Left lung (tissue), 14 donors: ENCODE measurements at regions of chr12 and their contacts with region 1.

Region 1: DNA sequence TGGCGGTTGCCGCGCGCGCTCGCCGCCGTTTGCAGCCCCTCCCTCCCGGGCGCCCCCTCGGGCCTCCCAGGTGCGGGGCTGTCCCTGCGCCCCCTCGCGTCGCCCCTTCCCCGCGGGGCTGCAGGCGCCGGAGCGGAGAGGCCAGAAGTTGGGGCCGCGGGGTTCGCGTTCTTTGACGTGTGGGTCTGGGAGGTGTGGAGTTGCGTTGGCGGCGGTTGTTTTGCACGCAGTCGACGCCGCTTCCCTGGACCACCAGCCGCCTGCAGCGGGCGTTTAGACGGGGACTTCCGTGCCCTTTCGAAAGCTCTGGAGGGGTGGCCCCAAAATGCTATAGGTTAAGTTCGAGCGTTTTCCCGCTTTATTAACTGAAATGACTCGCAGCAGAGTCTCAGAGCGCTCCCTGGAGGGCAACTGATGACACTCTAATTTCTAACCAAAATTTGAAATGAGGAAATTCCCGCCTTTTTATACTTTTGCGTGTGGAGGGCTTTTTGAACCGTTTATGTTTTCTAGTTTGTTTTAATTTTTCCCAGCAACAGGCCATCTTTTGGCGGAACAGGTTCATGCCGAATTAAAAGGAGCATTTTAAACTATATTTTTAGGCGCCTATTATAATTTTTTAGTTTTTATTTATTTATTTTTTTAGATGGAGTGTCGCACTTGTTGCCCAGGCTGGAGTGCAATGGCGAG is 939 bp downstream of the TMPO start:
- DNase-seq: peak; percentile 80 to 91 (median 84)
- ATAC-seq: peak; percentile 69
- H3K4me3 ChIP-seq: peak overlapping the region; percentile 85 to 95
- H3K27ac ChIP-seq: peak overlapping the region; percentile 94 to 96
- H3K4me1 ChIP-seq: peaks cover 8 to 65% of the 10 kb centered on the region in 2 donors
- H3K27me3 ChIP-seq: no peaks in the 10 kb centered on the region
- CTCF ChIP-seq: peak; percentile 43 to 52

Region 2: DNA sequence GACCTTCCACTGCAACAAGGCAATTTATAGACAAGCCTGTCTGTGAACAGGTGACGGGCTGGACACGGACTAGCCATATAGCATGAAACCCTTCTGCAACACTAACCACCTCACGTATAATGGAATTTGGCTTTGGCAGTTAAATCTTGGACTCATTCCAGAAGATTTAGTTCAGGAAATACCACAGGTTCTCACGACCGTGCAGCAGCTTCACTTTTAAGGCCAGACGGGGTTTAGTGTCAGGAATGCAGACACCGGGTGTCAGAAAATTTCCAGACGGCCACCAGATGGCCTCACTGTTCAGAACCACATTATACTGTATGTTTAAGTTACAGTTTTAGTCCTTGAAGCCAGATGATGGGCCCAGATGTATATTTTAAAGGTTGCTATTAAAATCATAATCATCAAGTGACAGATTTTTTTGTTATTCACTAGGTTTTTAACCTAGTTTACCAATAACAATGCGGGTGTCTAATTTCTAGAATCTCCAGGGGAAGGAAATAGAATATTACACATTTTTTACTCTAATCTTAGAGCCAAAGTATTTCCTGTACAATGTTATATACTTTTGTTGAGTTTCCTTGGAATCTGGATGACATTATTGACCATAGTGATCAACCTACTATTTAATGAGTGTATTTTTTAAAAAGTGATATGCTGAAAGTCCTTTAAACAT is 91.5 kb before region 1 on chr12:
- intact Hi-C with region 1: loop called in 1 of 2 experiments (anchors 5 kb)
- DNase-seq: peak in 3 of 4 donors; percentile 60 to 78 (median 61)
- ATAC-seq: peak; percentile 94
- H3K4me3 ChIP-seq: no peak overlapping the region
- H3K27ac ChIP-seq: no peak overlapping the region
- H3K4me1 ChIP-seq: peaks cover 0 to 11% of the 10 kb centered on the region in 2 donors
- H3K27me3 ChIP-seq: no peaks in the 10 kb centered on the region
- CTCF ChIP-seq: peak; percentile 66 to 69